ENCODE measurements at regions of chr15 and their contacts with region 1.

Region 1: DNA sequence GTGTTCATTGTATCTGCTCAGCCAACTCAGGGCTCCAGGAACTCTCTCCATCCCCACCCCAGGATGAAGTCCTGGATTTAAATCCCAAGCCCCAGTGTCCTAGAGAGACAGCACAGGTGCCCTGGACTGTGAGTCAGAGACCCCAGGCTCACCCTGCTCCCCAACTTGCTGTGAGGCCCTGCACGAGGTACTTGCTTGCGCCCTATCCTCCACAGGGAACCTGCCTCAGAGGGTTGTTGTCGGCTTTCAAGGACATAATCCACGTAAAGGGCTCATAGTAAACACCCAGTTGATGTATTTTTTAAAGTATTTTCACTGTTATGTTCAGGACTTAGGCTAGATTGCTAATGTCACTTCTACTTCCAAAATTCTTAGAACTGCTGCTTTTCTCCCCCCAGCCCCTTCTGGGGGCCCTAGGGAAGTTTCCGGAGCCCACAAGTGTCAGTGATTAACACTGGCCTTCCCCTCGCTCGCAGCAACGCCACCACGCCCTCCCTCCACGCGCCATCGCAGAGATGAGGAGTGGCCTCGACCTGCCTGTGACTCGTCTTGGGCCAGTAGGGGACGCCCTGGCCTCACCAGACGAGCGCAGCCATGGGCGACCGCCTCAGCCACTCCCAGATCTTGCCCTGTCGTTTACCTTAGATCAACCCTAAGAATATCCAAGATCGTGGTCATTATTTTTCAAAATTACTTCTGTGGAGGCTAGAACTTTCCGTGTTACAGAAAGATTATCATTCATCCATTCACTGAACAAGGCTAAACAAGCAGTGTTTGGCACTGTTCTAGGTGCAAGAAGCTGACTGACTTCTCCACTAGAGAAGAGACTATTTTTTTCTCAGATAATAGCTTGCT is 6.0 kb upstream of the SRP14 start:
- DNase-seq: peak; percentile 87 to 94 (median 91)
- ATAC-seq: peak; percentile 88 to 94 (median 92)
- H3K4me3 ChIP-seq: peak overlapping the region in 7 of 12 donors; percentile 7 to 43 (median 18)
- H3K27ac ChIP-seq: peak overlapping the region in 10 of 12 donors; percentile 5 to 61 (median 50)
- H3K4me1 ChIP-seq: peaks cover 6 to 67% (median 51%) of the 10 kb centered on the region in 12 donors
- H3K27me3 ChIP-seq: no peaks in the 10 kb centered on the region
- CTCF ChIP-seq: peak; percentile 77 to 99 (median 94)
- POLR2A ChIP-seq: peak in 1 of 2 donors; percentile 39

Region 2: DNA sequence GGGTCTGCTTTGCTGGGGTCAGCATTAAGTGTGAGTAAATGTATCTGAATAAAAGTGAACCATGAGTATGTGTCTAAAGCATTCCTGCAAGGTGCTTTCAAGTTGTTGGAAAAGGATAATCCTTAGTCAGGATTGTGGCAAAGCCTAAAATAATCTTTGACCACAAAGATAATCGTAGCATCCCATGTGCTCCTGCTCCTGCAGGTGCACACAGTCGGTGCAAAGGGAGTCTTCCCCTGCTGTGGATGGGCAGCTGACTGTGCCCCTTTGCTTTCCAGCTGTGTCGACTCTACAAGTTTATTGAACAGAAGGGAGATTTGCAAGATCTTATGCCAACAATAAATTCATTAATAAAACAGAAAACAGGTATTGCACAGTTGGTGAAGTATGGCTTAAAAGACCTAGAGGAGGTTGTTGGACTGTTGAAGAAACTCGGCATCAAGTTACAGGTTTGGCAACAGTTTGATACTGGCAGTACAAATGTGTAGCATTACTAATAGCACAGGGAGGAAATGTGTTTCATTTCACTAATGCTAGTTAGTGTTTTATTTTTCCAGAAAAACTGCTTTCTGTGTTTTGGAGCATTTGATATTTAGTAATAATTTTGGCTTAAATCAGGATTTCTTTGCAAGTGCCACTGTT is 28.6 kb before region 1 on chr15:
- intact Hi-C with region 1: no loop called
- DNase-seq: no peak
- ATAC-seq: no peak
- H3K4me3 ChIP-seq: no peak overlapping the region
- H3K27ac ChIP-seq: no peak overlapping the region
- H3K4me1 ChIP-seq: peaks cover 0 to under 1% (median 0%) of the 10 kb centered on the region in 12 donors
- H3K27me3 ChIP-seq: no peaks in the 10 kb centered on the region
- CTCF ChIP-seq: no peak
- POLR2A ChIP-seq: no peak

Region 3: GRCh38 chr15:40075298-40076044 is 30.5 kb after region 1 on chr15:
- intact Hi-C with region 1: loop called in 1 of 10 experiments (anchors 5 kb)
- DNase-seq: no peak
- ATAC-seq: no peak
- H3K4me3 ChIP-seq: no peak overlapping the region
- H3K27ac ChIP-seq: no peak overlapping the region
- H3K4me1 ChIP-seq: peaks cover 0 to 18% (median 8%) of the 10 kb centered on the region in 12 donors
- H3K27me3 ChIP-seq: no peaks in the 10 kb centered on the region
- CTCF ChIP-seq: no peak
- POLR2A ChIP-seq: no peak

Region 4: GRCh38 chr15:40160689-40161688 is 116.0 kb after region 1 on chr15 and contains the start of gene BUB1B:
- intact Hi-C with region 1: loop called in 3 of 10 experiments (anchors 5 to 10 kb)
- DNase-seq: peak; percentile 90 to 94 (median 92)
- ATAC-seq: peak; percentile 98 to 99 (median 99)
- H3K4me3 ChIP-seq: peak within 1 kb of the TSS; percentile 24 to 70 (median 62)
- H3K27ac ChIP-seq: no peak within 1 kb of the TSS
- H3K4me1 ChIP-seq: peaks cover 0 to 12% (median 6%) of the 10 kb centered on the region in 12 donors
- H3K27me3 ChIP-seq: no peaks in the 10 kb centered on the region
- CTCF ChIP-seq: no peak
- POLR2A ChIP-seq: no peak
- total RNA-seq, gene BUB1B: 0.46 to 6.4 (median 1.2) TPM in 8 of 9 donors, not detected in the other

Region 5: GRCh38 chr15:40274350-40275274 is 229.7 kb after region 1 on chr15:
- intact Hi-C with region 1: loop called (anchors 1 to 5 kb)
- DNase-seq: peak; percentile 79 to 90 (median 82)
- ATAC-seq: peak; percentile 43 to 69 (median 55)
- H3K4me3 ChIP-seq: no peak overlapping the region
- H3K27ac ChIP-seq: no peak overlapping the region
- H3K4me1 ChIP-seq: peaks cover 0 to 31% (median 2%) of the 10 kb centered on the region in 12 donors
- H3K27me3 ChIP-seq: peaks cover 2 to 20% (median 8%) of the 10 kb centered on the region in 9 donors
- CTCF ChIP-seq: peak; percentile 99 to 100 (median 100)
- POLR2A ChIP-seq: no peak

Region 6: DNA sequence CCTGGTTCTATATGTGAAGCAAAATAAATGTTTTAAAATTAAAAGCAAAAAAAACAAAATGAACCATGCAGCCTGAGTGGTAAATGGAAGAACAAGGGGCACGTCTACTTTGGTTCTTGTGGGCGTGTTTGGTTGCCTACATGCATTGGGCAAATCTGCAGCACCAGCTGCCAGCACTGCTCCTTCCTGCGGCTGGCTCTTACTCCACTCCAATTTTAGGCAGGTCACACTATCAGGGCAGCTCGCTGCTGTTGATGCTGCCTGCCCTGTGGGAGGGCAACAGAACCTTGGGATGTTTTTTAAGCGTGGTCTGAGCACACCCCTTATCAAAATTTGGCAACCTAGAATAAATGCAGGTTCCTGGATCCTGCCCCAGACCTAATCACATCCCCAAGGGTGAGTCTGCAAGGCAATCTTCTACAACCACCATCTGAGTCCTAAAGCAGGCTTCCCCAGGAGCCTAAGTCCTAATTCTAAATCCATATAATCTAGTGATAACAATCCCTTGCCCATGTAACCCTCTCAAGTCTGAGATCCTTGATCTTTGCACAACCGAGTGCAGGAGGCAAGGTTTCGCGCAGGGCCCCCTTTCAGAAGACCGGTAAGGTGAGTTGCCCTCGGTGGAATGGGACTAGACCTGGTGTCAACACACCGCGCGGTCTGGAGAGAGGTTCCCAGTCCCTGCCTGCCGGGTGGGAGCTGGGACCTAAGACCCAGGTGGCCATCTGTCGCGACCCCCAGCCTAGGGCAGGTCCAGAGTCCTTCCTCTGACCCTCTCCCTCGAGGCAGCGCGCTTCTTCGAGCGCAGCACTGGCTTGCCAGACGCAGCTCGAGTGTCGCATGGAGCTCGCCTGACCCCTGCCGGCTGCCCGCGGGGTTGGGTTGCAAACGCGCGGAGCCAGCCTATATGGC is 376.6 kb after region 1 on chr15:
- intact Hi-C with region 1: loop called in 2 of 10 experiments (anchors 10 kb)
- DNase-seq: peak; percentile 75 to 91 (median 80)
- ATAC-seq: peak; percentile 87 to 92 (median 90)
- H3K4me3 ChIP-seq: no peak overlapping the region
- H3K27ac ChIP-seq: peak overlapping the region; percentile 4 to 76 (median 69)
- H3K4me1 ChIP-seq: peaks cover 0 to 24% (median 18%) of the 10 kb centered on the region in 12 donors
- H3K27me3 ChIP-seq: no peaks in the 10 kb centered on the region
- CTCF ChIP-seq: peak; percentile 87 to 99 (median 94)
- POLR2A ChIP-seq: no peak